ENCODE measurements at regions of chr9 and their contacts with region 1.

Region 1: DNA sequence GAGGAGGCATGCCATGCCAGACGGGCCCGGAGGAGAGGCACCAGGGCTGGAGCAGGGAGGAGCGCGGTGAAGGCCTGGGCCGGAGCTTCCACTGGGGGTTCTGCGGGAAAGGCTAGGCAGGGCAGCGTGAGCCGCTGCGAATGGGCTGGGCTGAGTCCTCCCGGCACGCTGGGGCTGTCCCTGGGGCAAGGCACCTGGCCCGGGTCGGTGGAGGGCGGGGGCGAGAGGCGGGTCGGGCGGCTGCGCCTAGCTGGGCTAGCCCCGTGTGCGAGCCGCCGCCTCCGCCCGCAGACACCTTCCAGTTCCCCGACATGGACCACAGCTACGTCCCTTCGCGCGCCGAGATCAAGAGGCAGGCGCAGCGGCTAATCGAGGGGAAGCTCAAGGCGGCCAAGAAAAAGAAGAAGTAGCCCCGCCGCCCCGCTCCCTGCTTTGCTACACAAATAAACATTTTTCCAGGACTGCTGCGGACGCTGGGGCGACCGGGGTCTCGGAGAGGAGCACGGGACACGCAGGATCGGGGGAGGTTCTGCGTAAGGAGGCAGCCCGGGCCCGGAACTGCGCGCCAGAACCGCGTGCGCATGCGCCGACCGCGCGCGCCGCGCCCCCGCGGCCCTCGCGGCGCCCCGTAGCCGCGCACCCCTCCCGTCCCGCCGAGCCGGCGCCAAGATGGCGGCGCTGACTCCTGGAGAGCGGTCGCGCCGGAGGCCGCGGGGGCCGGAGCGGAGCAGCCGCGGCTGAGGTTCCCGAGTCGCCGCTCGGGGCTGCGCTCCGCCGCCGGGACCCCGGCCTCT is at the start of gene RABL6:
- DNase-seq: peak; percentile 86
- H3K4me3 Mint-ChIP-seq: peak within 1 kb of the TSS; percentile 77
- H3K27ac Mint-ChIP-seq: peak within 1 kb of the TSS; percentile 85
- H3K4me1 Mint-ChIP-seq: peaks cover 27% of the 10 kb centered on the region
- H3K27me3 Mint-ChIP-seq: no peaks in the 10 kb centered on the region
- total RNA-seq, gene RABL6: 83.4 to 85.3 TPM

Region 2: GRCh38 chr9:136671646-136672430 is 135.6 kb before region 1 on chr9:
- CTCF ChIA-PET with region 1: no interaction called
- POLR2A ChIA-PET with region 1: no interaction called
- intact Hi-C with region 1: no loop called
- DNase-seq: peak; percentile 48
- H3K4me3 Mint-ChIP-seq: no peak overlapping the region
- H3K27ac Mint-ChIP-seq: no peak overlapping the region
- H3K4me1 Mint-ChIP-seq: no peaks in the 10 kb centered on the region
- H3K27me3 Mint-ChIP-seq: peaks cover 5% of the 10 kb centered on the region

Region 3: GRCh38 chr9:136840140-136840687 is 32.7 kb after region 1 on chr9:
- CTCF ChIA-PET with region 1: interaction called, 56 read pairs
- POLR2A ChIA-PET with region 1: interaction called, 3 read pairs
- intact Hi-C with region 1: loop called (anchors 5 kb)
- DNase-seq: no peak
- H3K4me3 Mint-ChIP-seq: no peak overlapping the region
- H3K27ac Mint-ChIP-seq: no peak overlapping the region
- H3K4me1 Mint-ChIP-seq: peaks cover 15% of the 10 kb centered on the region
- H3K27me3 Mint-ChIP-seq: peaks cover 1% of the 10 kb centered on the region

Region 4: DNA sequence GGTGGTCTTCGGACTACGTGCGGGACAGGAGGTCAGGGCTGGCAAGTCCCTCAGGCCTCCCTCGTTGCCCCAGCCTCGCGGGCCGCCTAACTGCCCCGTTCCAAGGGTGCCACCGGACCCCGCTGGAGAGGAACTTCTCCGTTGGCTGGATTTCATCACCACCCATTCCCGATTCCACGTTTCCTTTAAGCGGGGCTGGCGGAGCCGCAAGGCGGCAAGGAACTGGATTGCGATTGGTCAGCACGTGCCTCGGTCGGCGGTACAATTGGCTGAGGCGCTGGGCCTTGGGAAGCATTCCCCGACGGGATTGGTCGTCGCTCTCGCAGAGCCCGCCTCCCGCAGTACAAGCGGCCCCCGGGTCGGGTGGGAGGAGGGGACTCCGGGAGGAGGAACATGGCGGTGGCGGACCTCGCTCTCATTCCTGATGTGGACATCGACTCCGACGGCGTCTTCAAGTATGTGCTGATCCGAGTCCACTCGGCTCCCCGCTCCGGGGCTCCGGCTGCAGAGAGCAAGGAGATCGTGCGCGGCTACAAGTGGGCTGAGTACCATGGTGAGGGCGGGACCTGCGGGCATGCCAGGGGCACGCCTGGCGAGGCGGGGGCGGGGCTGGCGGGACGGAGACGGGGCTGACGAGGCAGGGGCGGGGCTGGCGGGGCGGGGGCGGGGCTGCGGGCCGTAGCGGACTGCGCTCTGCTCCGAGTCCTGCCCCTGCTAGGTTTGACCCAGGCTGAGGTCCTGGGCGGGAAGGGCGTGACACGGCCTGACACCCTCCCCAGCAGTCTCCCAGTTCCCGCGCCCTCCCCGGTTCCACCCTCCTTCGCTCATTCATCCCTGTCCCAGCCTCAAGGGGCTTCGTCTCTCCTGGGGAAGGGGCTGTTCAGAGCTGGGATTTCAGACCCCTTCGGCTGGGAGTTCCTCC is 41.8 kb after region 1 on chr9 and contains the start of gene PHPT1:
- CTCF ChIA-PET with region 1: interaction called, 56 read pairs
- POLR2A ChIA-PET with region 1: no interaction called
- intact Hi-C with region 1: loop called (anchors 5 kb)
- DNase-seq: peak; percentile 98
- H3K4me3 Mint-ChIP-seq: peak within 1 kb of the TSS; percentile 85
- H3K27ac Mint-ChIP-seq: peak within 1 kb of the TSS; percentile 90
- H3K4me1 Mint-ChIP-seq: peaks cover 19% of the 10 kb centered on the region
- H3K27me3 Mint-ChIP-seq: peaks cover 17% of the 10 kb centered on the region
- total RNA-seq, gene PHPT1: 92.2 to 95.5 TPM

Measured in activated CD4-positive, alpha-beta memory T cell treated with anti-CD3 and anti-CD28 coated beads for 36 hours (primary cell).